Right ventricle myocardium superior (tissue), 1 donor: ENCODE measurements at regions of chr3 and their contacts with region 1.

Region 1: DNA sequence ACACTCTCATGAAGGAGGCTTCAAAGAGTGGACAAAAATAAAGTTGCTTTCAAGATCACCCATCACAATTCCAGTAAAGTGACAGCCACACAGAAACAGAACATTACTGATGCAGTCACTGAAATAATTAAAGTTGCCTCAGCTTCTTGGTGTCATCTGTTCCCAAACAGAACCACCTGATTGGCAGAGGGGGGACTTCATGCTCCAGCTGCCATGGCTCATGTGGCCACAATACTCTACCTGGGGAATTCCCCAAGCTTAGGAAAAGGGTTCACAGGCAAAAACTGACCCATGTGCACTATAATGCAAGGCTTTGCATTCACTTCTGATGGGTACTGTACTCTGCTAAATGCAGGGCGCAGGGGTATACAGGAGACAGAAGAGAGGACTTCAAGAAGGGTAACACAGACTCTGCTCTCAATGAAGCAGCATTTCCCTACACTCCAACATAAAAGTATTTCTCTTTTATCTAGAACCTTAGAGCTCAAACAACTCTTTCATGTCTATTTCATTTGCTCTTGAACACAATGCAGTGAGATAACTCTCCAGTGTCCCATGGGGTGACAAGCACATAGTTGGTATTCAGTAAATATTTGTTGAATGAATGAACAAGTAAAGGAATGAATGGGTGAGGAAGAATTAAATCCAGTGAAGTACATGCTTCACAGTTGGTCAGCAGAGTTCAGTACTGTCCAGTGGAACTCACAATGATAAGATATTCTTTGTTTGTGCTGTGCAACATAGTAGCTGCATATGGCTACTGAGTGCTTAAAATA is 8.6 kb upstream of the CTNNB1 start:
- DNase-seq: no peak
- ATAC-seq: no peak

Region 2: GRCh38 chr3:40884911-40885310 is 305.8 kb before region 1 on chr3:
- intact Hi-C with region 1: loop called (anchors 5 kb)
- DNase-seq: no peak
- ATAC-seq: no peak

Region 3: GRCh38 chr3:41018855-41019254 is 171.8 kb before region 1 on chr3:
- intact Hi-C with region 1: no loop called
- DNase-seq: no peak
- ATAC-seq: no peak

Region 4: DNA sequence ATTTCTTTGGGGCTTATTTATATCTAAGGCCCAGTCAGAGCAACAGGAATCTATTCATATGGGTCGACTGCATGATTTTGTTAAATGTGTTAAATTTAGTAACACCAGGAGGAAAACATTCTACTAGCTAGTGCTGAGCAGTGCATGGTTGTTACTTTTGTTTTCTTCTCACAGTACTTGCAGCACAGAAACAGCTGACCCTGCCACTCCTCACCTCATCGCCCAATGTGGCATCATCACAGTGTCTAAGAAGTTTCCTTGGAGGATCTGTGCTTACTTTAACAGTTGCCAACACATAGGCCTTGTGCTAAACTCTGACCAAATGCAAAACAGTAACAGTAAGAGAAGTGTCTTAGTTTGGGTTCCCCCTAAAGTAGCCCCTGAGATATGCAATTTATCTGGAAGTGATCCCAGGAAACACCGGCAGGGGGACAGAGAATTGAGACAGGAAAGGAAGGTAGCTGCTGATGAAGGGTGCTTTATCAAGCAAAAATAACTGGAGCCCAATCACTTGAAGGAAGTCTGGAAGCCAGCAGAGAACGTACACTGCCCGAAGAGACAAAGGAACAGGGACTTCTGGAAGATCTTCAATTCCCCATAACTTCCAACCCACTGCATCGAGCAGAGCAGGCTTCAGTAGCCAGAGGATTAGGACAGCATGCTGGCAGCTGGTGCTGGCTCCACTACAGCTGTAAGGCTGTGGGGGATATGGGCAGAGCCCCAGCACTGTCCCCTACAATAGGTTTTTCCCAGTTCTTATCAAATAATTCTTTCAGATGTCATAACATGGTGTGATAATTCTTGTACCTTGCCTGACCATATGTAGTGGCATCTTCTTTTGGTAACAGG is 807.2 kb after region 1 on chr3:
- intact Hi-C with region 1: no loop called
- DNase-seq: no peak
- ATAC-seq: peak; percentile 63